IMR-90 (cell line): ENCODE measurements at regions of chr2 and their contacts with region 1.

Region 1: GRCh38 chr2:207408086-207408794 is 121.5 kb upstream of the CREB1 start:
- DNase-seq: no peak
- ATAC-seq: peak; percentile 14; the same call in 1 of the 2 replicates
- H3K4me3 ChIP-seq: no peak overlapping the region
- H3K27ac ChIP-seq: no peak overlapping the region
- H3K4me1 ChIP-seq: peaks cover 2% of the 10 kb centered on the region; the same call in 1 of the 2 replicates
- H3K27me3 ChIP-seq: no peaks in the 10 kb centered on the region
- CTCF ChIP-seq: no peak
- POLR2A ChIP-seq: no peak
- RAD21 ChIP-seq: no peak

Region 2: DNA sequence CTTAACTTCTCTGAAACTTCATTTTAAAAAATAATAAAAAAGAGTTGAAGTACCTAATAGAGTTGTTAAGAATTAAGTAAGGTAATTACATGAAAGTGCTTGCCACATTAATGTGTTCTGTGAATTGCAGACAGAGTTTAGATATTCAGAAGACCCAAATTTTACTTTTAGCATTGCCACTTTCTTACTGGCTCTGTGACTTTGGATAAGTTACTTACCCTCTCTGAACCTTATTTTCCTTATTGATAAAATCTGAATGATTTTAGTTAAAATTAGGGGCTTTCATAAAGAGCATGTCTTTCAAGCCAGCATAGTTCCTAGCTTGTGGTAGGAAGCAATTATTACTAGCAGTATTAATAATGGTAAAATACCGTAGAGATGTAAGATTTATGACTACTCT is 20.3 kb after region 1 on chr2:
- CTCF ChIA-PET with region 1: no interaction called
- POLR2A ChIA-PET with region 1: interaction called, 12 read pairs
- dilution Hi-C with region 1: no loop called
- in situ Hi-C with region 1: no loop called
- intact Hi-C with region 1: no loop called
- DNase-seq: no peak
- ATAC-seq: no peak
- H3K4me3 ChIP-seq: no peak overlapping the region
- H3K27ac ChIP-seq: no peak overlapping the region
- H3K4me1 ChIP-seq: peaks cover 2% of the 10 kb centered on the region; the same call in 1 of the 2 replicates
- H3K27me3 ChIP-seq: no peaks in the 10 kb centered on the region
- CTCF ChIP-seq: no peak
- POLR2A ChIP-seq: no peak
- RAD21 ChIP-seq: no peak